Ascending aorta (tissue), 2 donors: ENCODE measurements at regions of chr11 and their contacts with region 1.

Region 1: DNA sequence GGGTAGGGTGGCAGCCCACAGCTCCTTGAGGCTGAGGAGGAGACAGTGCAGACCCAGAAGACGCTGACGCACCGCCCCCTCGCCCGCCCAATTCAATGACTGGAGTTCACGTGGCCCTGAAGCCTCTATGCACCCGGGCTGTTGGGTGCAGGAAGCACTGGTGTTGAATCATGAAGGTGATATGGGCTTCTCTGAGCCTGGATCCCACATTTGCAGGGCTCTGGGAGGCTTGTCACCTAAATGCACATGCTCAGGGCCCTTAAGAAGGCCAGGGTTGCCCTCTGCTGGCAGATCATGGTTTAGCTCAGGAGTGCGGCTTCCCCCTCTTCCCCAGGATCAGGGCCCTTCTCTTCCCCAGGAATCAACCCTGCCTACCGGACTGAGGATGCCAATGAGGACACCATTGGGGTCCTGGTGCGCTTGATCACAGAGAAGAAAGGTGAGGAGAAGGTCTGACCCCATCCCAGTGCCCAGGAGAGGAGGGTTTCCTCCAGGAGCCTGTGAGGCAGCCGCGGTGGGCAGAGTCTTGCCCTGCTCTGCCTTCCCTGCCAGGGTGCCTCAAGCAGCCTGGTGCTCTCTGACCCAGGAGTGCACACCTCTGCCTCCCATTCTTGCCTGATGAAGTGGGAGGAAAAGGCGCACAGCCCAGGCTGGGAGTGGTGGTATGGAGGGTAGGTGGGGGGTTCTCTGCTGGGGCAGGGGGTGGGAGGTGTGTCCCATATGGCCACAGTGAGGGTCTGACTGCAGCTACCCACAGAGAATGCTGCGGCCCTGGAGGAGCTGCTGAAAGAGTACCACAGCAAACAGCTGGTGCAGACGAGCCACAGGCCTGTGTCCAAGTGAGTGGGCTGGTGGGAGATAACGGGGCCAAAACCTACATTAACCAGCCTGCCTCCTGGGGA is 17.5 kb downstream of the RELT start:
- DNase-seq: peak in 1 of 2 donors; percentile 88
- H3K4me3 ChIP-seq: no peak overlapping the region
- H3K27ac ChIP-seq: no peak overlapping the region
- H3K4me1 ChIP-seq: no peaks in the 10 kb centered on the region
- H3K27me3 ChIP-seq: no peaks in the 10 kb centered on the region
- CTCF ChIP-seq: peak; percentile 76 to 83 (median 78)

Region 2: DNA sequence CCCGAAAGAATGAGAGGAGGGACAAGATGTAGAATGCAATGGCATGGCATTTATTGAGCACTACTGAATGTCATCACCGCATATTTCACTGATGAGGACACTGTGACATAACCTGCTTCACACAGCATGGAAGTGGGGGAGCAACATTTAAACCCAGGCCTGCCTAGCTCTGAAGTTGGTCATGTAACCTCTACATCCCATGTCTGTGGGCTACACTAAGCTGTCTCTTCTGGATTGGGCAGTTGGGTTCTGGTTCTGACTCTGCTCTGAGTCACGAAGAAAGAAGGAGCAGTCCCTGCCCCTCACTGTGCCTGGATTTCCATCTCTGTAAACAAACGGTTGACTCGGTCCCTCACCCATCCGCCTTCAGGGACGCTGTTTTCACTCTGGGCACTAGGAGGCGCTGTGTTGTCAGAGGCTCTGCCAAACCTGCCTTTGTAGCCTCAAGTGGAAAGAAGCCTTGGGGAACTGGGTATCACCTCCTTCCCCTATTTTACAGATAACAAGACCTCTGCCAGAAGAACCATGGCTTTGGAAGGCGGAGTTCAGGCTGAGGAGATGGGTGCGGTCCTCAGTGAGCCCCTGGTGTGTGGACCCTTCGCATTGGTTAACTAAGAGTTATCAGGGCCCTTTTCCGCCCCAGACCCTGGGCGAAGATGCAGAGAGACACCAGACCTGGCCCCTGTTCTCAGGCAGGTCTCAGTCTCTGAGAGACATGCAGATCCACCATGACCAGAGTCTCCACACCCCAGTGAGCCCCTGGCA is 98.3 kb before region 1 on chr11:
- intact Hi-C with region 1: loop called (anchors 1 kb)
- DNase-seq: peak in 1 of 2 donors; percentile 83
- H3K4me3 ChIP-seq: no peak overlapping the region
- H3K27ac ChIP-seq: no peak overlapping the region
- H3K4me1 ChIP-seq: no peaks in the 10 kb centered on the region
- H3K27me3 ChIP-seq: no peaks in the 10 kb centered on the region
- CTCF ChIP-seq: peak; percentile 80 to 91 (median 89)

Region 3: GRCh38 chr11:73350908-73351636 is 42.7 kb before region 1 on chr11:
- intact Hi-C with region 1: loop called (anchors 1 kb)
- DNase-seq: peak in 1 of 2 donors; percentile 84
- H3K4me3 ChIP-seq: no peak overlapping the region
- H3K27ac ChIP-seq: peak overlapping the region; percentile 54 to 69
- H3K4me1 ChIP-seq: peaks cover 3 to 9% of the 10 kb centered on the region in 2 donors
- H3K27me3 ChIP-seq: no peaks in the 10 kb centered on the region
- CTCF ChIP-seq: peak; percentile 86 to 97 (median 96)